ENCODE measurements at regions of chr19 and their contacts with region 1.

Region 1: GRCh38 chr19:41753936-41754529 is 1.3 kb upstream of the CEACAM6 start:
- DNase-seq: peak; percentile 76
- H3K4me3 Mint-ChIP-seq: no peak overlapping the region
- H3K27ac Mint-ChIP-seq: peak overlapping the region; percentile 19
- H3K4me1 Mint-ChIP-seq: peaks cover 71% of the 10 kb centered on the region
- H3K27me3 Mint-ChIP-seq: peaks cover 1% of the 10 kb centered on the region
- CTCF ChIP-seq: peak; percentile 56

Region 2: GRCh38 chr19:41785653-41786052 is 31.6 kb after region 1 on chr19:
- CTCF ChIA-PET with region 1: interaction called, 36 read pairs
- intact Hi-C with region 1: loop called (anchors 1 kb)
- DNase-seq: peak; percentile 84
- H3K4me3 Mint-ChIP-seq: no peak overlapping the region
- H3K27ac Mint-ChIP-seq: peak overlapping the region; percentile 4
- H3K4me1 Mint-ChIP-seq: peaks cover 29% of the 10 kb centered on the region
- H3K27me3 Mint-ChIP-seq: no peaks in the 10 kb centered on the region
- CTCF ChIP-seq: peak; percentile 93

Region 3: DNA sequence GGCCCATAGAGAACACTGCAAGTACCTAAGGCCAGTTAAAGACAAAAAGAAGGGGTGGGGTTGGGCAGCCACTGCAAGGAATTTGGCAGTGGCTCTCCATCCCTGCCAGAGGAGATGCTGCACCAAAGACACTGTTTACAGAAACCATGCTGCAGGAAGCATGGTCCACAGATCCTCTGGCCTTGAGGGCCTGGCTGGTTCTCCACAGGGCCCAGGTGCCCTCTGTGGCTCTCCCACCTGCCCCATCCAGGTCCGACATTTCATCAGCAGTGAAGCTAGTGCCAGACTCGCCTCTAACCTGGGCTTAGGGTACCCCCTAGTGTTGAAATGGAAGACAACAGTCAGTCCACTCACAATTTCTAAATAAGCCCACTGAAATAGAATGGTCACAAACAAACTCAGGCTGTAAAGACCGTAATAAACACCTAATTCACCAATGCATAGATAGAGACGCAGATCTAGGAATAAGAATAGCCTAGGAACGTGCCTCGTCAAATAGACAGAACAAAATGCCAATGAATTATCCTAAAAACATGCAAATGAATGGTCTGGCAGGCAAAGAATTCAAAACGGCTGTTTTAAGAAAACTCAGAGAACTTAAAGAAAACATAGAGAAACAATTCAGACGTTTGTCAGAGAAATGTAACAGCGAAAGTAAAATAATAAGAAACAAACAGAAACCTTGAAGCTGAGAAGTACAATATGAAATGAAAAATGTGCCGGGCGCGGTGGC is 67.1 kb after region 1 on chr19:
- CTCF ChIA-PET with region 1: interaction called, 13 read pairs
- intact Hi-C with region 1: no loop called
- DNase-seq: peak; percentile 82
- H3K4me3 Mint-ChIP-seq: no peak overlapping the region
- H3K27ac Mint-ChIP-seq: no peak overlapping the region
- H3K4me1 Mint-ChIP-seq: no peaks in the 10 kb centered on the region
- H3K27me3 Mint-ChIP-seq: peaks cover 70% of the 10 kb centered on the region
- CTCF ChIP-seq: peak; percentile 79

Measured in Calu3 (cell line).